ENCODE measurements at regions of chr9 and their contacts with region 1.

Region 1: GRCh38 chr9:91037511-91038482 is 236.2 kb downstream of the SYK start:
- DNase-seq: peak; percentile 78 to 90
- H3K4me3 ChIP-seq: no peak overlapping the region
- H3K27ac ChIP-seq: peak overlapping the region; percentile 81 to 86
- H3K4me1 ChIP-seq: peaks cover 18 to 24% of the 10 kb centered on the region in 2 donors
- H3K27me3 ChIP-seq: no peaks in the 10 kb centered on the region
- CTCF ChIP-seq: no peak
- POLR2A ChIP-seq: no peak

Region 2: DNA sequence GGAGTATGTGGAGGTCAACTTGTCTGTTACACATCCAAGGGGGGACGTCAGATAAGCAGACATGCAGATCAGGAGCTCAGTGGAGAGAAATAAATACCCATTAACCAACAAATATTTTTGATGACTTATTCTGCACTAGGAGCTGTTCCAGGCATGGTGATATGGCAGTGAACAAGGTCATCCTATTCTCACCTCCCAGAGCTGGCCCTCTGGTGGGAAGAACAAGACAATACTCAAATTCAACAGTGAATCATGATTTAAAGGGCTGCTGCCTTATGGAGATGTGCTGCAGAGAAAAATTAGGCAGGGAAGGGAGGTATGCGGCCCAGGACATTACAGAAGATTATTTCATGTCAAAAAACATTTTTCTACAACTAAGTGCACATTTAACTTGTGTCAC is 199.7 kb before region 1 on chr9:
- intact Hi-C with region 1: no loop called
- DNase-seq: no peak
- H3K4me3 ChIP-seq: no peak overlapping the region
- H3K27ac ChIP-seq: no peak overlapping the region
- H3K4me1 ChIP-seq: no peaks in the 10 kb centered on the region
- H3K27me3 ChIP-seq: no peaks in the 10 kb centered on the region
- CTCF ChIP-seq: no peak
- POLR2A ChIP-seq: no peak

Region 3: DNA sequence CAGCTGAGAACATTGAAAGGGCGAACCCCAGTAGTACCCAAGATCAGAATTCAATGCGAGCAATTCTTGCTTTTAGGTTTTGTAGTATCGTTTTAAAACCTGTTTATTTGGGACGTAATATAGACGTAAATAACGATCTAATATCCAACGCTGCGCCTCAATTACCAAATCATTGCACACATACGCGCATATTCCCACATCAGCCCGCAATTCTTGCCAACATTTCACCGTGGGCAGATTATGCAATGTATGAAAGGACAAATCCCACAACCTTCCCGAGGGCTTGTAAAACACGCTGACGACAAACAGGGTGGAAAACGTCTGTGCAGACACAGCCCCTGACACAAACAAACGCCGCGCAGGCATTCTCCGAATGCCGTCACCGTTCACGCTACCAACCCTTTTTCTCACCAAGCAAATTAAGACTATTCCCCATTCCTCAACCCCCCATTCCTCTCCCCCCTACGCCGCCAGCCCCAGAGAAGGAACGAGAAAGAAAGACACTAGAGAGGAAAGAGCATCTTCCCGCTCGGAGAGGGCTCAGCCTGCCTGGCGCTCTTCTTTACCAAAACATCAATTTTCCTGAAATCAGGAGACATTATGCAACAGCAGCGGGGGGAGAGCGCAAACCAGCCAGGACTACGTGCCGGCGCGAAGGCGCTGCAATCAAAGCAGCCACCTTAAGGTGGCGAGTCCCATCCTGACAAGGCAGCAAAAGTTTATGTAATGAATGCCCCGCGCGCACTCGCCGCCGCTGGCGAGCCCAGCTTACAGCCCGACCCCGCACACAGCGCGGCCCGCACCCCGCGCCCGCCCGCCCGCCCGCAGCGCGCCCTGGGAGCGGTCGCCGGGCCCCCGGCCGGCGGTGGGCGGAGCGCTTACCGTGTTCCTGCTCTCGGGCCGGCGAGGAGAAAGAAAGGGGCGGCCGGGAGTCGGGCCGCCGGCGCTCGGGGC is 385.2 kb after region 1 on chr9:
- intact Hi-C with region 1: loop called (anchors 2 kb)
- DNase-seq: peak; percentile 75 to 80
- H3K4me3 ChIP-seq: peak overlapping the region; percentile 72 to 76
- H3K27ac ChIP-seq: peak overlapping the region; percentile 90 to 98
- H3K4me1 ChIP-seq: no peaks in the 10 kb centered on the region
- H3K27me3 ChIP-seq: no peaks in the 10 kb centered on the region
- CTCF ChIP-seq: peak in 2 of 4 experiments; percentile 40 to 45
- POLR2A ChIP-seq: peak in 1 of 2 donors; percentile 45